Adrenal gland (tissue), 19 donors: ENCODE measurements at regions of chr1 and their contacts with region 1.

Region 1: DNA sequence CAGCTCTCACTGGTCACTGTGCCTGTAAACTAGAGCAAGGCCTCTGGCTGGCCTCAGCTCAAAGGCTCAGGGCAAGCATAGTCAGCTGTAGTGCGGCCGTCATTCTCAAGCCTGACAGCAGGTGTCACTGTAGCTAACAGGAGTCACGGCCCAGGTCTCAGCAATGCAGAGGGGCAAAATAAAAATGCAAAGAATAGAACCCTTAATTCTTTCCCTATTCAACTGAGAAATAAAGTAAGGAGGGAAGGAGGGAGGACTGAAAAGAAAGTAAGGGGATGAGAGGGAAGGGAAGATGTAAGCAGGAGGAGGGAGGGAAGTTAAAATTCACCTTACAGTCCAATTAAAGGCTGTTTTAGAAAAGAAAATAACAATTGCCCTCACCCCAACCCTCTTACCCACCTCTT is 106.1 kb downstream of the KIAA0319L start:
- DNase-seq: peak; percentile 84 to 97 (median 93)
- H3K4me3 ChIP-seq: no peak overlapping the region
- H3K27ac ChIP-seq: peak overlapping the region in 4 of 5 donors; percentile 33 to 95 (median 77)
- H3K4me1 ChIP-seq: peaks cover 43 to 69% of the 10 kb centered on the region in 2 donors
- H3K27me3 ChIP-seq: no peaks in the 10 kb centered on the region
- CTCF ChIP-seq: peak; percentile 70 to 92 (median 89)
- POLR2A ChIP-seq: no peak

Region 2: GRCh38 chr1:35557292-35558063 is 106.4 kb after region 1 on chr1 and contains the starts of genes KIAA0319L and NCDN:
- intact Hi-C with region 1: loop called in 1 of 2 experiments (anchors 5 kb)
- DNase-seq: peak; percentile 96 to 99 (median 98)
- H3K4me3 ChIP-seq: peak within 1 kb of the TSS; percentile 25 to 94 (median 74)
- H3K27ac ChIP-seq: peak within 1 kb of the TSS; percentile 89 to 99 (median 94)
- H3K4me1 ChIP-seq: peaks cover 28 to 63% of the 10 kb centered on the region in 2 donors
- H3K27me3 ChIP-seq: no peaks in the 10 kb centered on the region
- CTCF ChIP-seq: no peak
- POLR2A ChIP-seq: peak; percentile 58 to 64
- total RNA-seq, gene KIAA0319L: 53.8 to 278 (median 86.1) TPM
- total RNA-seq, gene NCDN: 16.2 to 49.3 (median 43.1) TPM

Region 3: DNA sequence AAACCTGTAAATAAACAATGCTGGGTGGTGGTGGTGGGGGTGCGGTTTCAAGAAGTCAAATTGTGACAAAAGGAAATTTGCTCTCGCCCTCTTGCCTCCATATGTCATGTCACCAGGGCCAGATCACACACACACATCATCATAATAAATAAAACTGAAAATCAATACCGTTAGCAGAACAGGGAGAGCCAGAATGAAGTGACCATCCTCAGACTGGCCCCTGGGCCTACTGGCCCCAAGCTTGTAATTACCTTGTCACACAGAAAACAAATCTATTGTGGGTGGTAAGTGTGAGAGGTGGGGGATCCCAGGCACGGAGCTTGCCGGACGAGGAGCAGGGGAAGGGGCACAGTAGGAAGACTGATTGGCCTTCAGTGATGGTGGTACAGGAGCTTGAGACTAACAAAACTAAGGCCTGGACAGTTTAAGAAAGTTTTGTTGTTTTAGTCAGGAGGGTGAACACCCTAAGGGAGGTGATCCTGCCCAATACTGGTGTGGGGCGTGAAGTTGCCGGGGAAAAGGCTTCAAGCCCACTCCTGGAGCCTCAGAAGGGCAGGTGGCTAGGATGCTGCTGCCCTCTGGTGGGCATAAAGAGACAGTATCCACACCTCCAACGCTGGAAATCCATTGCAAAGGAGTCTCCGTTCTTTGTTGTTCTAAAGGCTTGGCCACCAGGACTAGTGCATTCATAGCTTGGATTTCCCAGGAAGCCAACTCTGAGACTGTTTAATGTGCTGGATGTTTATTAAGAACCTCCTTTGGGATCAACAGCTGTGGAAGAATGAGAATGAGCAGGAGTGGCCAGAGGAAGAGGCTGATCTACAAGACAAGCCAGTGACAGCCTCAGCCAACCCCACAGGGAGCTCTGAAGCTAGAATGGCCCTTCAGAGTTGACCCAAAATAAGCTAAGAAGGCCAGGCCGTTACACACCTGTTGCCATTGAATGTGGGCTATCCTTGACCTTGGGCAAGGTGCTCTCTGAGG is 275.6 kb after region 1 on chr1:
- intact Hi-C with region 1: loop called in 1 of 2 experiments (anchors 5 kb)
- DNase-seq: peak; percentile 27 to 78 (median 53)
- H3K4me3 ChIP-seq: no peak overlapping the region
- H3K27ac ChIP-seq: no peak overlapping the region
- H3K4me1 ChIP-seq: no peaks in the 10 kb centered on the region
- H3K27me3 ChIP-seq: no peaks in the 10 kb centered on the region
- CTCF ChIP-seq: peak; percentile 68 to 86 (median 78)
- POLR2A ChIP-seq: no peak

Region 4: GRCh38 chr1:35769759-35770446 is 318.8 kb after region 1 on chr1 and contains the start of gene CLSPN:
- intact Hi-C with region 1: loop called in 1 of 2 experiments (anchors 10 kb)
- DNase-seq: peak; percentile 94 to 97 (median 96)
- H3K4me3 ChIP-seq: peak within 1 kb of the TSS; percentile 10 to 87 (median 71)
- H3K27ac ChIP-seq: peak within 1 kb of the TSS in 4 of 5 donors; percentile 67 to 83 (median 79)
- H3K4me1 ChIP-seq: peaks cover 0 to 6% of the 10 kb centered on the region in 2 donors
- H3K27me3 ChIP-seq: no peaks in the 10 kb centered on the region
- CTCF ChIP-seq: no peak
- POLR2A ChIP-seq: peak in 1 of 2 donors; percentile 65
- total RNA-seq, gene CLSPN: 0.12 to 5.8 (median 0.72) TPM in 8 of 9 donors, not detected in the other